SK-N-SH (cell line): ENCODE measurements at regions of chr17 and their contacts with region 1.

Region 1: GRCh38 chr17:50200457-50201275 is 765 bp downstream of the COL1A1 start:
- DNase-seq: peak; percentile 95
- H3K4me3 ChIP-seq: peak overlapping the region; percentile 74 to 96
- H3K27ac ChIP-seq: peak overlapping the region; percentile 79 to 100
- H3K4me1 ChIP-seq: peaks cover 37 to 62% of the 10 kb centered on the region in 2 experiments
- H3K27me3 ChIP-seq: no peaks in the 10 kb centered on the region
- CTCF ChIP-seq: peak; percentile 100
- EP300 ChIP-seq: peak in 1 of 2 experiments; percentile 63; a peak in 2 of 4 replicates
- RAD21 ChIP-seq: peak; percentile 87

Region 2: GRCh38 chr17:50114849-50115357 is 85.8 kb before region 1 on chr17:
- CTCF ChIA-PET with region 1: interaction called, 46 read pairs
- POLR2A ChIA-PET with region 1: no interaction called
- DNase-seq: peak; percentile 79
- H3K4me3 ChIP-seq: no peak overlapping the region
- H3K27ac ChIP-seq: no peak overlapping the region
- H3K4me1 ChIP-seq: peaks cover 0 to 24% of the 10 kb centered on the region in 2 experiments; a peak in 1 of 4 replicates
- H3K27me3 ChIP-seq: no peaks in the 10 kb centered on the region
- CTCF ChIP-seq: peak; percentile 93
- EP300 ChIP-seq: no peak
- RAD21 ChIP-seq: peak; percentile 75

Region 3: DNA sequence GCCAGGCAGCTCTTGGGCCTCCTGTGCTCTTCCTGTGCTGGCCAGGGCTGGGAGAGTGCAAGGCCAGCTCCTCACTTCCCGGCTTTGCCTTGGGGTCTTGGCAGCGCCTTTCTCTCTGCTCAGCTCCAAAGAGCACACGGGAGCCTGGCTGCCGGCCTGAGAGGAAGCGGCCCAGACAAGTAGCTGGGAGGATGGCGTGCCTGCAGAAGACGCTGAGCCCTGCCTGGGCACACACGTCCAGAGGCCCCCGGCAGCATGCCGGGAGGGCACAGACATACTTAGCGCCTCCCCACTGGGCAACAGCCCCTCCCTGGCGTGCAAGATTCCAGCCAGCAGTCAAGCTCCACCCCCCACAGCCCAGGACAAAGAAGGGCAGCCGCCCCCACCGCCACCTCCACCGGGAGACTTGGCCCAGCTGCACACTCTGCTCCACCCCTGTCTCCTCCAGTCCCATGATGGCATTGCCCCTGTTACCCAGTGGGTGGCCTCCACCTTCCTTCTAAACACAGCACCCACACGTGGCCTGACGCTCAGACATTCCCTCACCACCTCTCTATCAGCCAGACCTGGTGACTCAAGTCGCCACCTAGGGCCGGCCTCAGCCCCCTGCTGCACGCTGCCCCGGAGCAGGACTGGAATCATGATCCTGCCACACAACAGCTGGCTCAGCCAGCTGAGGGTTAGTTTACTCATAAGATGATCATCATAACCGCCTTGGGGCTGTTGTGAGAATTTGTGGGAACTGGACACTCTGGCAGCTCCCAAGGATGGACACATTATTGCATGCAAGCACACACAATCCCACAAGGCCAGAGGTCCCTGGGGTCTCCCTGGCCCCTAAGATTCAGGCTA is 22.5 kb before region 1 on chr17:
- CTCF ChIA-PET with region 1: interaction called, 517 read pairs
- POLR2A ChIA-PET with region 1: interaction called, 7 read pairs
- DNase-seq: peak; percentile 93
- H3K4me3 ChIP-seq: peak overlapping the region in 1 of 2 experiments; percentile 15; a peak in 1 of 4 replicates
- H3K27ac ChIP-seq: peak overlapping the region; percentile 94 to 100
- H3K4me1 ChIP-seq: peaks cover 29 to 52% of the 10 kb centered on the region in 2 experiments; a peak in 3 of 4 replicates
- H3K27me3 ChIP-seq: no peaks in the 10 kb centered on the region
- CTCF ChIP-seq: peak; percentile 77
- EP300 ChIP-seq: peak; percentile 27 to 36; a peak in 2 of 4 replicates
- RAD21 ChIP-seq: peak; percentile 53

Region 4: DNA sequence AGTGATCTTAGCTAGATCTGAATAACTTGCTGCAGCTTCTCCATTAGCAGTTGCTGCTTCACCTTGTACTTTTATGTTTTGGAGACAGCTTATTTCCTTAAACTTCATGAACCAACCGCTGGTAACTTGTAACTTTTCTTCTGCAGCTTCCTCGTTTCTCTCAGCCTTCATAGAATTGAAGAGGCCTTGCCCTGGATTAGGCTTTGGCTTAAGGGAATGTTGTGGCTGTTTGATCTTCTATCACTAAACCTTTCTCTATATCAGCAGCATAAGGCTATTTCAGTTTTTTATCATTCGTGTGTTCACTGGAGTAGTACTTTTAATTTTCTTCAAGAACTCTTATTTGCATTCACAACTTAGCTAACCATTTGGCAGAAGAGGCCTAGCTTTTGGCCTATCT is 52.1 kb after region 1 on chr17:
- CTCF ChIA-PET with region 1: interaction called, 47 read pairs
- POLR2A ChIA-PET with region 1: no interaction called
- DNase-seq: no peak
- H3K4me3 ChIP-seq: no peak overlapping the region
- H3K27ac ChIP-seq: no peak overlapping the region
- H3K4me1 ChIP-seq: no peaks in the 10 kb centered on the region; a peak in 1 of 4 replicates
- H3K27me3 ChIP-seq: no peaks in the 10 kb centered on the region
- CTCF ChIP-seq: no peak
- EP300 ChIP-seq: no peak
- RAD21 ChIP-seq: no peak

Region 5: DNA sequence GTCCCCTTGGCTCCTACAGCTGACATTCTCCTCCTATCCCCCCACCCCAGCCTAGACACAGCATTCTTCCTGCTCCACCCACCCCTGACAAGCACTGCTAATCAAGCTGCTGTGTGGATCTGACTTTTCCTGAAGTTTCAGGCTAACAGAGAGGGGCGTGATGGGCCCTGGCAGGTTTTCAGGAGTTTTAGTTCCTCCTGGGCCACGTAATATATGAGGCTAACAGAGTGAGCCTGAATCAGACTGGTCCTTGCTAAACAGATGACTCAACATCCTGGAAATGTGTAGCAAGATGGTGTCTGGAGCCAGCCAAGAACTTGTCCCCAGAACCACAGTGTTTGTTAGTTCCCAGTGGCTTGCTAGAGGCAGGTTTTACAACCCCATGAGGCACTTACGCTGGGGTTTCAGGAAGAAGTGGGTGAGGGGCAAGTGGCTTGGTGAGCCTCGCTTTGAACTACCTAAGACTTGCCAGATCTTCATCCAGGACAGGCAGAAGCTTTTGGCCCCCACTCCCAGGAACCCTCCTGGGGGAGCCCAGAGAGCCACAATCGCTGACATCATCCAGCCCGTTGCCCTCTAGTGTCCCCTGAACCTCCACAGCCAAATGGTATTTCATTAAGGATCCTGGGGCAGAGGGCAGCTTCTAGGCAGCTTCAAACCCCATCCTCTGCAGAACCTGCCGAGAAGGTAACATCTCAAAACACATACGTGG is 89.5 kb after region 1 on chr17:
- CTCF ChIA-PET with region 1: interaction called, 2,150 read pairs
- POLR2A ChIA-PET with region 1: no interaction called
- DNase-seq: no peak
- H3K4me3 ChIP-seq: peak overlapping the region in 1 of 2 experiments; percentile 18; a peak in 2 of 4 replicates
- H3K27ac ChIP-seq: peak overlapping the region in 1 of 2 experiments; percentile 79; a peak in 2 of 4 replicates
- H3K4me1 ChIP-seq: peaks cover 0 to 27% of the 10 kb centered on the region in 2 experiments; a peak in 3 of 4 replicates
- H3K27me3 ChIP-seq: no peaks in the 10 kb centered on the region
- CTCF ChIP-seq: no peak
- EP300 ChIP-seq: no peak; a peak in 1 of 4 replicates
- RAD21 ChIP-seq: no peak

Region 6: GRCh38 chr17:50345432-50346312 is 145.0 kb after region 1 on chr17 and contains the start of gene XYLT2:
- CTCF ChIA-PET with region 1: interaction called, 10 read pairs
- POLR2A ChIA-PET with region 1: no interaction called
- DNase-seq: peak; percentile 100
- H3K4me3 ChIP-seq: peak within 1 kb of the TSS; percentile 75 to 84
- H3K27ac ChIP-seq: peak within 1 kb of the TSS; percentile 36 to 83
- H3K4me1 ChIP-seq: peaks cover 11 to 20% of the 10 kb centered on the region in 2 experiments; a peak in 3 of 4 replicates
- H3K27me3 ChIP-seq: no peaks in the 10 kb centered on the region
- CTCF ChIP-seq: no peak
- EP300 ChIP-seq: no peak
- RAD21 ChIP-seq: no peak
- polyA plus RNA-seq, gene XYLT2: 26.5 and 28.4 TPM in 2 replicates